CD4-positive, alpha-beta T cell (primary cell): ENCODE measurements at regions of chr5 and their contacts with region 1.

Region 1: DNA sequence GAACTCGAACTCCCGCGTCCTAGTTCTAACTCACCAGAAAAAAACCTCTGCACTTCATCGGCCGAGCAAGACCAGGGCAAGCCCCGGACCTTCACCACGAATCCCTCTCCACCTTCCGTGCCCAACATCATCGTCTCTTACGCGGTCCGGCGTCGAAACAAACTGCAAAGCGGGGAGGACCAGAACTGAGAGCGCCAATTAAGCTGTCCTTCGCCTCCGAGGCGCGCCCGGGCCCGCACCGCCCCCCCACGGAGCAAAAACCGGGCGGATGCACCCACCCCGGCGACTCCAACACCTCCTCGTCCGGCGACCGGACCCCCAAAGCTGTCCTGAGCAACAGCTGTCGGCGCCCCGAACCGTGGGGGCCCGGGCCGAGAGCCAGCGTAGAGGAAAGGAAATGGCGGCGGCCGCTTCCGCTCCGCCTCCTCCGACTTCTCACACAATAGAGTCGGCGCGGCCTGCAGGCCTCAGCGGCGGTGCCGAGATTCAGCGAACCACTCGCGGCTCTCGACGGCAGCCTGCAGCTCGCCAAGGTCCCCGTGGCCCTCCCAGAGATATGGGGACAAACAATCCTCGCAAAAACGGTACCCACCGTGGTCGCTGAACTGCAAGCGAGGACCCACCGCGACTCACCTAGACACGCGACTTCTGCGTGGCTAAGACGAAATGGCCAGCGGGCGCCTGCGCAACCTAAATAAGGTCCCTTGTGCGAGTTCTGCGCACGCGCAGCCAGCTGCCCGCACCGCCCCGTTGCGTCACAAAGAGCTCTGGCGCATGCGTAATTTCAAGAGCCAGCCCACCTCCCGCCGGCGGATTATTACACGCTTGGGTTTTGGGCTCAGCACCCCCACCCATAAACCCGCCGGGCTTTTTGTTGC is at the start of gene HNRNPH1:
- DNase-seq: peak; percentile 95 to 99 (median 99)
- ATAC-seq: peak; percentile 74
- H3K4me3 ChIP-seq: peak within 1 kb of the TSS; percentile 86
- H3K4me3 Mint-ChIP-seq: peak within 1 kb of the TSS; percentile 99
- H3K27ac ChIP-seq: peak within 1 kb of the TSS; percentile 95 to 99
- H3K27ac Mint-ChIP-seq: peak within 1 kb of the TSS; percentile 100
- H3K4me1 ChIP-seq: peaks cover 38% of the 10 kb centered on the region
- H3K4me1 Mint-ChIP-seq: peaks cover 55% of the 10 kb centered on the region
- H3K27me3 ChIP-seq: no peaks in the 10 kb centered on the region
- H3K27me3 Mint-ChIP-seq: peaks cover 8% of the 10 kb centered on the region
- CTCF ChIP-seq: no peak
- total RNA-seq, gene HNRNPH1: 2,404 to 2,435 TPM

Region 2: GRCh38 chr5:179550511-179551230 is 72.6 kb before region 1 on chr5 and contains the start of gene RUFY1:
- CTCF ChIA-PET with region 1: no interaction called
- POLR2A ChIA-PET with region 1: interaction called, 89 read pairs
- intact Hi-C with region 1: loop called (anchors 2 to 10 kb)
- DNase-seq: peak; percentile 63 to 91 (median 79)
- ATAC-seq: peak; percentile 76
- H3K4me3 ChIP-seq: peak within 1 kb of the TSS; percentile 91
- H3K4me3 Mint-ChIP-seq: peak within 1 kb of the TSS; percentile 99
- H3K27ac ChIP-seq: peak within 1 kb of the TSS; percentile 74 to 77
- H3K27ac Mint-ChIP-seq: peak within 1 kb of the TSS; percentile 97
- H3K4me1 ChIP-seq: peaks cover 37% of the 10 kb centered on the region
- H3K4me1 Mint-ChIP-seq: peaks cover 37% of the 10 kb centered on the region
- H3K27me3 ChIP-seq: no peaks in the 10 kb centered on the region
- H3K27me3 Mint-ChIP-seq: no peaks in the 10 kb centered on the region
- CTCF ChIP-seq: no peak
- total RNA-seq, gene RUFY1: 19.5 to 21.8 TPM

Region 3: DNA sequence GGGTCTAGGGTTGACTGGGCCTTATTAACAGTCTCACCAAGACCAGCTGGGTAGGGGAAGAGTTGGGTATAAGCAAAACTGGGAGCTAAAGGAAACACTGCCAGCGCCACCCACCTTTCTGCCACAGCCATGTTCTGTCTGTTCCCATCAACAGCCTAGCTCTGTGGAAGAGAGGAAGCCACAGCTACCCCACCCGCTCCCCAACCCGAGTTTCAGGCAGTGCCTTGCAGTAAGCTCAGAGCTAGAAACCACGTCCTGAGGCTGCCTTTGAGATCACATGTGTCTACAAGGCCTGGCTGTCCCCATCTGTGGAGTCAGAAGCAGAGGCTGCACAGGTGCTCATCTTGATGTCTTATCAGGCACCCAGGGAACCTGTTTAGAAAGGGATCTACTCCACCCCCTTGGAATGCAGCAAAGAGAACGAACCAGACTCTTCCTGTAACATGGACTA is 15.1 kb before region 1 on chr5:
- CTCF ChIA-PET with region 1: interaction called, 14 read pairs
- POLR2A ChIA-PET with region 1: interaction called, 226 read pairs
- intact Hi-C with region 1: no loop called
- DNase-seq: peak; percentile 31 to 77 (median 42)
- ATAC-seq: peak; percentile 89
- H3K4me3 ChIP-seq: no peak overlapping the region
- H3K4me3 Mint-ChIP-seq: peak overlapping the region; percentile 45
- H3K27ac ChIP-seq: peak overlapping the region in 1 of 2 donors; percentile 30
- H3K27ac Mint-ChIP-seq: peak overlapping the region; percentile 78
- H3K4me1 ChIP-seq: peaks cover 41% of the 10 kb centered on the region
- H3K4me1 Mint-ChIP-seq: peaks cover 49% of the 10 kb centered on the region
- H3K27me3 ChIP-seq: no peaks in the 10 kb centered on the region
- H3K27me3 Mint-ChIP-seq: no peaks in the 10 kb centered on the region
- CTCF ChIP-seq: no peak

Region 4: GRCh38 chr5:179697993-179698934 is 75.0 kb after region 1 on chr5:
- CTCF ChIA-PET with region 1: interaction called, 3 read pairs
- POLR2A ChIA-PET with region 1: interaction called, 17 read pairs
- intact Hi-C with region 1: loop called (anchors 1 to 2 kb)
- DNase-seq: peak; percentile 97 to 100 (median 98)
- ATAC-seq: peak; percentile 86
- H3K4me3 ChIP-seq: peak overlapping the region; percentile 93
- H3K4me3 Mint-ChIP-seq: peak overlapping the region; percentile 95
- H3K27ac ChIP-seq: peak overlapping the region; percentile 83 to 94
- H3K27ac Mint-ChIP-seq: peak overlapping the region; percentile 98
- H3K4me1 ChIP-seq: peaks cover 49% of the 10 kb centered on the region
- H3K4me1 Mint-ChIP-seq: peaks cover 47% of the 10 kb centered on the region
- H3K27me3 ChIP-seq: no peaks in the 10 kb centered on the region
- H3K27me3 Mint-ChIP-seq: no peaks in the 10 kb centered on the region
- CTCF ChIP-seq: no peak

Region 5: GRCh38 chr5:180670586-180671359 is 1047.5 kb after region 1 on chr5:
- CTCF ChIA-PET with region 1: no interaction called
- POLR2A ChIA-PET with region 1: no interaction called
- intact Hi-C with region 1: no loop called
- DNase-seq: peak in 12 of 14 experiments; percentile 28 to 73 (median 48)
- ATAC-seq: peak; percentile 83
- H3K4me3 ChIP-seq: no peak overlapping the region
- H3K4me3 Mint-ChIP-seq: peak overlapping the region; percentile 49
- H3K27ac ChIP-seq: no peak overlapping the region
- H3K27ac Mint-ChIP-seq: no peak overlapping the region
- H3K4me1 ChIP-seq: peaks cover 13% of the 10 kb centered on the region
- H3K4me1 Mint-ChIP-seq: peaks cover 17% of the 10 kb centered on the region
- H3K27me3 ChIP-seq: peaks cover 6 to 9% of the 10 kb centered on the region in 2 experiments
- H3K27me3 Mint-ChIP-seq: peaks cover 7% of the 10 kb centered on the region
- CTCF ChIP-seq: peak; percentile 69

Region 6: DNA sequence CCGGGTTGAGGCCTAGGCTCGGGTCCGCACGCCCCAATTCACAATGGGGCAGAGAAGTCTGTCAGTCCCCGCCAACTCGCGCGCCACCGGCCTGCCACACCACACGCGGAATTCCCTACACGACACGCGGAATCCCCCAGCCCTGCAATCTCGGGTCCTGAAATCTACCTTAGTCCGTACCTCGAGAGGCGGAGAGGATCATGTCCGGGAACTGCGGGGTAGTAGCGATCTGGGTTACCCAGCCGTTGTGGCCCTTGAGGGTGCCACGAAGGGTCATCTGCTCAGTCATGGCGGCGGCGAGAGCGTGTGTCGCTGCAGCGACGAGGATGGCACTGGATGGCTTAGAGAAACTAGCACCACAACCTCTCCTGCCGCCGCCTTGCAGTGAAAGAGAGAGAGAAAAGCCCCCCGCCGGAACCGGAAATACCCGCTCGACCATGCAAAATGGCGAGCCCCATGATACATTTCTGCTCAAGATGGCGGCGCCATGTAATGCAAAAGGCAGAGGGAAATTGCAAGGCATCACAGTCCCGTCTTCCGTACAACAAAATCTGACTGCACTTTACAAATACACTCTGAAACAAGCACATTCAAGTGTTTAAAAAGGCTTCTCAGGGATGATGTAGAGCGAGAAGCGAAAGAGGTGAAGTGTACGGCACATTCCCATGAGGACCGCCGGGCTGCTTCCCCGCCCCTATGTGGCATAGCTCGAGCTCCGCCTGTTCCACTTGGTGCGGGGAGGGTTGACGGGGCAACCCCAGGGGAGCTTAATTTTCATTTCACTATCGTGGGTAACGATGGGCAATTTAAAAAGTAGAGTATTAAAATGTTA is 1620.5 kb after region 1 on chr5 and contains the start of gene RACK1:
- CTCF ChIA-PET with region 1: no interaction called
- POLR2A ChIA-PET with region 1: no interaction called
- intact Hi-C with region 1: loop called in 1 of 2 experiments (anchors 10 kb)
- DNase-seq: peak; percentile 84 to 95 (median 88)
- ATAC-seq: peak; percentile 75
- H3K4me3 ChIP-seq: peak within 1 kb of the TSS; percentile 94
- H3K4me3 Mint-ChIP-seq: peak within 1 kb of the TSS; percentile 95
- H3K27ac ChIP-seq: peak within 1 kb of the TSS; percentile 81 to 90
- H3K27ac Mint-ChIP-seq: peak within 1 kb of the TSS; percentile 96
- H3K4me1 ChIP-seq: peaks cover 87% of the 10 kb centered on the region
- H3K4me1 Mint-ChIP-seq: peaks cover 76% of the 10 kb centered on the region
- H3K27me3 ChIP-seq: no peaks in the 10 kb centered on the region
- H3K27me3 Mint-ChIP-seq: no peaks in the 10 kb centered on the region
- CTCF ChIP-seq: no peak
- total RNA-seq, gene RACK1: 2,499 to 2,682 TPM